Psoas muscle (tissue), 8 donors: ENCODE measurements at regions of chr3 and their contacts with region 1.

Region 1: DNA sequence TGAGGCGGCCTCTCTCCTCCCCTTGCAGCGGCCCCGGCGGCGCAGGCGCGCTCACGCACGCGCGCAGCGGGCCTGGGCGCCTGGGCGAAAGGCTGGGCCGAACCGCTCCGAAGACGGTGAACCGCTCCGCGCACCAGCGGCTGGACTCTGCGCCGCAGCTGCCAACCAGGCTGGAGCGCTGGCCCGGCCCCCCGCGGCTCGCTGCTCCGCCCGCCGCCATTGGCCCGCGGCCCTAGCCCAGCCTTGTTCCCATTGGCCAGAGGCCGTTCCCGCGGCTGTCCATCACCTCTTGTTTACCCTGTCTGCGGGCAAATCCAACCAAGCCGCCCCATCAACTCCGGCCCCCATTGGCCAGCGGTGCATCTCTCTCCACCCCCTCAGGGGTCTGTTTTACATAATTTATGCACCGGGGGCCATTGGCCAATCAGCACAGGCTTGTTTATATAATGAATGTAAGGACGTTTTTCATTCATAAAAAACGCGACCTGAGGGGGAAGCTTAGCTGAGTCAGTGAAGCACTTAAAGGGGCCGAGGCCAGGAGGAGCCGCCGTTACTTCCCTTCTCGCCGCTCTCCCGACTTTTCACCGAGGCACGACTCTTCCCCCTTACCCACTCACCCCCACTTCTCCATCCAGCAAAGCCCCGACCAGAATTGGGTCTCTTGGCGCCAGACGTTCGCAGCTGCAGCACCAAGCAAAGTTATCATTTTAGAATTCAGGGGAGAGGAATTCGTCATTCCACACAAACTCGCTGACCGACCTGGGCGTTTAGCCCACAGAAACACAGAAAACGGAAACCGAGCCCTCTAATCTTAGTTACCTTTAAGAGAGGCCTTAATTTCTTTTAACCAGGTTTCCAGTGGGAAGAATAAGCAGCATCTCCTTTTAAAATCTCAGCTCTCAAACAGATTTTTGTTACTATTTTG is at the start of gene ETV5:
- DNase-seq: peak; percentile 99 to 100
- ATAC-seq: peak; percentile 93 to 98 (median 96)
- H3K4me3 ChIP-seq: peak within 1 kb of the TSS; percentile 88
- H3K27ac ChIP-seq: peak within 1 kb of the TSS; percentile 88
- H3K4me1 ChIP-seq: peaks cover 11% of the 10 kb centered on the region
- H3K27me3 ChIP-seq: peaks cover 0 to 2% (median 0%) of the 10 kb centered on the region in 3 donors
- CTCF ChIP-seq: no peak
- total RNA-seq, gene ETV5: 7.2 to 47.1 (median 27.3) TPM

Region 2: DNA sequence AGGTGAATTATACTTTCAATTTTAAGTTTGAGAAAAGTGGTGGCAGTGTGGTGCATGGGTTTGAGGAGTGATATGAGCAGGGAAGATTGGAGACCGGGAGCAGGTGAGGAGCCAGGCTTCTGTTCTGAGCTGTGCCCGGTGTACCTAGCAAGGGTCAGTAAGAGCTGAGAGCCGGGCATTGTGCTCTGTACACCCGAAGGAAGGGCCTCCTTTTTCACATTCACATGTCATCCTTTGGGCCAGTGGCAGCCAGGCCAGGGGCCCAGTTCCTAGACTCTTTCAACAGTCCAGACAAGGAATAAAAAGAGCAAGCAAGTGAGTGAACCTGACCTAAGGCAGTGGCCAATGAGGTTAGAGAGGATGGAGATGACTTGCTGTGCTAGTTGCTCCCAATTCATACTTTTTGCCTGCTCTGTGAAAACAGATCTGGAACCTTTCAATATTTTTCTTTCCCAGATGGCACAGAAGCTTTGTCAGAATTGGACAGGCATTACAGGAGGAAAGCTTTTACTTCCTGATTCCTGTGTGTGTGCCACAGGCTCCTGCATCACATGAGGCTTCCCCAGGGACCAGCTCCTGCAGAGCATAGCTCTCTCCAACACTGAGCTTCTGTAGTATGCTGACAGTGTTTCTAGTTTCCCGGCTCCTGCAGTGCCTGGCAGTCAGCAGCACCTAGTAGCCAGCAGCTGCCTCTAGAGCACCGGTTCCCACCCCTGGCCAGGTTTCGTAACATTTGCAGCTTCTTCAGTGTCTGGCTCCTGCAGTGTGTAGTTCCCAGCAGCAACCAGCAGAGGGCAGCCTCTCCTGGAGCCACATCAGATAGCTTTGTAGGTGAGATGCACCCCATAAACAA is 166.1 kb before region 1 on chr3:
- intact Hi-C with region 1: loop called in 1 of 2 experiments (anchors 5 kb)
- DNase-seq: peak; percentile 88 to 93
- ATAC-seq: peak; percentile 98 to 99 (median 98)
- H3K4me3 ChIP-seq: peak overlapping the region; percentile 13
- H3K27ac ChIP-seq: peak overlapping the region; percentile 75
- H3K4me1 ChIP-seq: peaks cover 11% of the 10 kb centered on the region
- H3K27me3 ChIP-seq: no peaks in the 10 kb centered on the region
- CTCF ChIP-seq: peak; percentile 99

Region 3: DNA sequence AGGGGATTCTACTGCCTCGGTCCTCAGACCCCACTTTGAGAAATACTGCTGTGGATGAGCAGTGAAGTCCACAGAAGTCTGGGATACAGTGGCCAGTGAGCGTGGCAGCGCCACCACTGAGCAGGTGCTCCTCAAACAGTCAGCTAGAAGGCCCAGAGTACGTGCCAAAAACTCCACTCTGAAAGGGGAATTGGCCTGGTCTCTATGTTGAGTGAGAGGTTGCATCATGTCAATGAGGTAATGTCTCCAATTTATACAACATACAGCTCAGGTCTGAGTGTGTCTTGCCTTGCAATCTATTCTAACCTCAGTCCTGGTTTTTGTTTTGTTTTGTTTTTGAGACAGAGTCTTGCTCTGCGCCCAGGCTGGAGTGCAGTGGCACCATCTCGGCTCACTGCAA is 53.0 kb after region 1 on chr3:
- intact Hi-C with region 1: loop called in 1 of 2 experiments (anchors 5 kb)
- DNase-seq: peak in 1 of 2 donors; percentile 24
- ATAC-seq: peak; percentile 89 to 98 (median 96)
- H3K4me3 ChIP-seq: no peak overlapping the region
- H3K27ac ChIP-seq: peak overlapping the region; percentile 69
- H3K4me1 ChIP-seq: no peaks in the 10 kb centered on the region
- H3K27me3 ChIP-seq: no peaks in the 10 kb centered on the region
- CTCF ChIP-seq: no peak

Region 4: GRCh38 chr3:186217820-186218164 is 108.6 kb after region 1 on chr3:
- intact Hi-C with region 1: loop called (anchors 2 to 5 kb)
- DNase-seq: no peak
- ATAC-seq: peak in 1 of 4 donors; percentile 28
- H3K4me3 ChIP-seq: no peak overlapping the region
- H3K27ac ChIP-seq: peak overlapping the region; percentile 58
- H3K4me1 ChIP-seq: peaks cover 64% of the 10 kb centered on the region
- H3K27me3 ChIP-seq: no peaks in the 10 kb centered on the region
- CTCF ChIP-seq: no peak

Region 5: GRCh38 chr3:186241910-186242821 is 133.0 kb after region 1 on chr3:
- intact Hi-C with region 1: loop called in 1 of 2 experiments (anchors 5 kb)
- DNase-seq: peak; percentile 72 to 90
- ATAC-seq: peak; percentile 94 to 96 (median 95)
- H3K4me3 ChIP-seq: peak overlapping the region; percentile 65
- H3K27ac ChIP-seq: peak overlapping the region; percentile 90
- H3K4me1 ChIP-seq: peaks cover 46% of the 10 kb centered on the region
- H3K27me3 ChIP-seq: no peaks in the 10 kb centered on the region
- CTCF ChIP-seq: peak; percentile 58